Thyroid gland (tissue), 4 donors: ENCODE measurements at regions of chr1 and their contacts with region 1.

Region 1: GRCh38 chr1:165629848-165630628 is 996 bp upstream of the MGST3 start:
- DNase-seq: no peak
- H3K4me3 ChIP-seq: peak overlapping the region in 2 of 3 donors; percentile 56 to 66
- H3K27ac ChIP-seq: peak overlapping the region; percentile 82 to 95 (median 92)
- H3K4me1 ChIP-seq: peaks cover 24 to 30% of the 10 kb centered on the region in 2 donors
- H3K27me3 ChIP-seq: no peaks in the 10 kb centered on the region
- CTCF ChIP-seq: no peak
- POLR2A ChIP-seq: no peak

Region 2: GRCh38 chr1:165703648-165704047 is 73.6 kb after region 1 on chr1:
- intact Hi-C with region 1: loop called (anchors 5 kb)
- DNase-seq: no peak
- H3K4me3 ChIP-seq: no peak overlapping the region
- H3K27ac ChIP-seq: no peak overlapping the region
- H3K4me1 ChIP-seq: no peaks in the 10 kb centered on the region
- H3K27me3 ChIP-seq: no peaks in the 10 kb centered on the region
- CTCF ChIP-seq: no peak
- POLR2A ChIP-seq: no peak

Region 3: DNA sequence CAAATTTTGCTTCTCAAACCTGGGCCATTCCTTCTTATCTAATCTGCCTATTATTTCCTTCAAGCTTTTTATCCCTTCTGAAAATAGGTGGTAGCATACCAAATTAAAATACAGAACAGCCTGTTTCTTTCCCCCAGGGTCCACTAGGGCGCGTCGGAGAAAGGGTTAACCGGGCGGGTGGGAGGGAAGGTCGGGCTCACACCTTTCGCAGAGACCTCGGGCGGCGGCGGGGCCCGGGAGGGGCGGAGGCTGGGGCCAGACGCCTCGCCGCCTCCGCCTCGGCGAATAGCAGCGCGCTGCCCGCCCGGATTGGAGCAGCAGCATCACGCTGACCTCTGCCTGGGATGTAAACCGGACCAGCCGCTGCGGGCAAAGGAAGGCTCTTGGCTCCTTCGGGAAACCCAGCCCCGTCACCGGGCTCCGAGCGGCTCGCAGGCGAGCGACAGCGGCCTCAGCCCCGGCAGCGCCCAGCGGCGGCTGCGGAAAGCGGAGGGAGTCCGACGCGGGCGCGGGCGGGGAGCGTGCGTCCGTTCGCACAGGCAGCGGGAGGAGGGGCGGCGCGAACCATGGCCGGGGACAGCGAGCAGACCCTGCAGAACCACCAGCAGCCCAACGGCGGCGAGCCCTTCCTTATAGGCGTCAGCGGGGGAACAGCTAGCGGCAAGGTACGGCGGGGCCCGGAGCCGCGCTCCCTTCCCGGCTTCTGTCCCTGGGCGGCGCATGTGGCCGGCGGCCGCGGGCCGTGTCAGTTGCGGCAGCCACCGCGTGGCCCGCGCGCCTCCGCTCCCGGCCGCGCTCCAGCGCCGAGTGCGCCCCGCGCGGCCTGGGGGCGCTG is 197.4 kb after region 1 on chr1 and contains the start of gene UCK2:
- intact Hi-C with region 1: loop called (anchors 10 kb)
- DNase-seq: peak; percentile 80 to 82
- H3K4me3 ChIP-seq: peak within 1 kb of the TSS; percentile 72 to 87 (median 72)
- H3K27ac ChIP-seq: peak within 1 kb of the TSS; percentile 67 to 88 (median 81)
- H3K4me1 ChIP-seq: peaks cover 5% of the 10 kb centered on the region in 2 donors
- H3K27me3 ChIP-seq: no peaks in the 10 kb centered on the region
- CTCF ChIP-seq: peak in 2 of 6 experiments; percentile 23 to 25
- POLR2A ChIP-seq: peak in 1 of 2 donors; percentile 77
- total RNA-seq, gene UCK2: 15.9 to 21.0 (median 19.3) TPM

Region 4: DNA sequence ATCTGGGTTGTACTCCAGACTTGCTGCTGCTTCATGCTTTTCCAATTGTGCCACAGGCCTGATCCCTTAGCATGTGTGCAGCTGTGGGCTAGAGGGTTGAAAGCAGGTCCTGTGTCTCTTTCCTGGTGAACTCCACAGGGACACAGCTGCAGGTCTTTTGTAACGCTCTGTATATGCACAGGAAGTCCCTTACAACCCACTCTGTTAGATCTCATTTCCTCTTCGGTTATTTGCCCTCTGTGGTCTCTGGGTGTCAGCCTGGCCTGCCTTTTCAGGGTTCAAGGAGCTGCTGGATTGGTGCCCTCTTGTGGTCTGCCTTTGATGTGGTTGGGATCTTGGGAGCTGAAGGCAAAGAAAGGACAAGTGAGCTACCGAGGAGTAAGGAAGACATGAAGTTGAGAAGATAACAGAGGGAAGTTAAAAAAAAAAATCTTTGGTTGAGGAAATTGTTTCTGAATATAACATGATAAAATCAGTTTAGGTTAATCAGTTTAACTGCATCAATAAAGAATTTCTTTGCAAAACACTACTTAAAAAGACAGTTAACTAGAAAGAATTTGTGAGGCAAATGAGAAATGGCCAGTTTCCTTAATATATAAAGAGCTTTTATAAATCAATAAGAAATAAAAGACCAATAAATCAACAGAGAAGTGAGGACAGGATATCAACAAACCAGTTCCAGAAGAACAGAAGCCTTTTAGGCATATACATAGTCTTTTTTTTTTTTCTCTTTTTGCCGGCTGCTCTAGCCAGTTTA is 241.5 kb after region 1 on chr1:
- intact Hi-C with region 1: no loop called
- DNase-seq: peak in 1 of 2 donors; percentile 34
- H3K4me3 ChIP-seq: no peak overlapping the region
- H3K27ac ChIP-seq: no peak overlapping the region
- H3K4me1 ChIP-seq: no peaks in the 10 kb centered on the region
- H3K27me3 ChIP-seq: no peaks in the 10 kb centered on the region
- CTCF ChIP-seq: peak in 2 of 6 experiments; percentile 26 to 31
- POLR2A ChIP-seq: no peak